Common myeloid progenitor, CD34-positive (primary cell): ENCODE measurements at regions of chr12 and their contacts with region 1.

Region 1: DNA sequence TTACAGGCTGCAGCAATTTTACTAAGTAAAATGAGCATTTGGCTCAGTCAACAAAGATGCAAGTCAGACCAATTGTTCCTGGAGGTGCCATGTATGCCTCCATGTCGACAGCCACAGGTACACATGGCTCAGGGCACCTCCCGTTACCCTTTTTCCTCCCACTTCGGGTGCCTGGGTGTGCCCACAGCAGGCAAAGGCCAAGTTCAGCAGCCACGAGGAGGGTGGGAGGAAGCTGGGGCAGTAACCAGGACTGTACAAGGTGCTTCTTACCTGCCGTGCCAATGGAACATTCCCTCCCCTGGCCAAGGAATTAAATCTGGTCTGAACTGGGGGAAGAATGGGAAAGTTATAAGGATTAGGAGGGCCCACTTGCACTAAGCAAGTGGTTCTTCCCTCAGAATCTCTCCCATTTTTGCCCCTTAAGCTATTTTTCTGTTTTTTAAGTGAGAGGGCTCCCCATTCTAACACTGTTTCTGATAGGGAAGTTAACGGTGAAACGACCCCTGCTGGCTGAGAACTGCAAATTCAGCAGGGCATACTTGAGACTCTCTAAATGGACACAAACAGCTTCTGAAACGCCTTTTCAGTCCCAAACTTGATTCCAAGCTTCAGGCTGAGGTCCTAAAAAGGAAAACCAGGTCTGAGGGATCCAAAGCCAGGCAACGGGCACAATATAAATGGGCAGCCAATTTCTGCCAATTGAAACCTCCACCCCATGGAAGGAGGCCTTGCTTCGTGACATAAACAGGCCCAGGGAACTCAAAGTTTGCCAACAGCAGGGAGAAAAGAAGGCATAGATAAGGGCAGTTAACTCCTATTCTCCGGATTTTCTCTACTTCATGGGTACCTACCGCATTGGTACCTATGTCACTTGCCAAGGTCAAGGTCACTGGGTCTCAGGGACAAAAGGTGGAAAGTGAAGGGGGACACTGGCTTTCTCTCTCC is 24.8 kb downstream of the CLECL1 start:
- DNase-seq: peak; percentile 61 to 80 (median 74)
- H3K4me3 ChIP-seq: no peak overlapping the region
- H3K27ac ChIP-seq: no peak overlapping the region
- H3K4me1 ChIP-seq: peaks cover 0 to 8% (median 3%) of the 10 kb centered on the region in 4 experiments
- H3K27me3 ChIP-seq: no peaks in the 10 kb centered on the region

Region 2: DNA sequence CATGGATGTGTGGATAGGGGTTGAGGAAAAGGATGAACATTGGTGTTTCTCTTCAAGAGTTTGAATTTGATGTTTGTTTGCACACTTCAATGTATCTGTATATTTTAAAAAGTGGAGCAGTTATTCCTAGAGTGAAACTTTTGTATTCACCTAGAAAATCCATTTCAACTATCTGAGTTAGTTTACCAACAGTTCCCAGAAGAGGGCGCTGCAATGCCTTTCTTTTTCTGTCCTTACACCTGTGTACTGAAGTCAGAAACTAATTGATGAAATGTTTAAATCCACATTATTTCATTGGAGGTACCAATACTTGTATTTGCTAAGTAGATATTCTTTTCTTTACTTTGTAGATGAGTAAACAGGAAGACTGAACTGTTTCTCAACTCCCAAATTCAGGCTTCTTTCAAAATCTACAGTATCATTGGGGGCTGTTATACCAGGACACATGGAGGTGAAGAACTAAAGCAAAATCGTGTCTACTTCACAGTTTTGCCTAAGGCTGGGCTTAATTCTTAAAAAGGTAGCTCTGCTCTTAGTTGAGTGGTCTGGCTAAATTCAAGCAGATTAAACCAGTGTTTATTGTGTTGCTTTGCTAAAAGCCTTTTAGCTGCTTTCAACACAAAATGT is 73.8 kb before region 1 on chr12:
- CTCF ChIA-PET with region 1: interaction called, 44 read pairs
- POLR2A ChIA-PET with region 1: no interaction called
- DNase-seq: peak; percentile 68 to 78 (median 70)
- H3K4me3 ChIP-seq: no peak overlapping the region
- H3K27ac ChIP-seq: no peak overlapping the region
- H3K4me1 ChIP-seq: peaks cover 9 to 16% (median 12%) of the 10 kb centered on the region in 4 experiments
- H3K27me3 ChIP-seq: no peaks in the 10 kb centered on the region

Region 3: GRCh38 chr12:9647825-9648700 is 60.1 kb before region 1 on chr12:
- CTCF ChIA-PET with region 1: interaction called, 14 read pairs
- POLR2A ChIA-PET with region 1: interaction called, 3 read pairs
- DNase-seq: peak; percentile 93 to 97 (median 97)
- H3K4me3 ChIP-seq: peak overlapping the region; percentile 42 to 98 (median 76)
- H3K27ac ChIP-seq: peak overlapping the region; percentile 73 to 86
- H3K4me1 ChIP-seq: peaks cover 15 to 61% (median 44%) of the 10 kb centered on the region in 4 experiments
- H3K27me3 ChIP-seq: no peaks in the 10 kb centered on the region